Sciatic nerve (tissue), 2 donors: ENCODE measurements at regions of chr1 and their contacts with region 1.

Region 1: DNA sequence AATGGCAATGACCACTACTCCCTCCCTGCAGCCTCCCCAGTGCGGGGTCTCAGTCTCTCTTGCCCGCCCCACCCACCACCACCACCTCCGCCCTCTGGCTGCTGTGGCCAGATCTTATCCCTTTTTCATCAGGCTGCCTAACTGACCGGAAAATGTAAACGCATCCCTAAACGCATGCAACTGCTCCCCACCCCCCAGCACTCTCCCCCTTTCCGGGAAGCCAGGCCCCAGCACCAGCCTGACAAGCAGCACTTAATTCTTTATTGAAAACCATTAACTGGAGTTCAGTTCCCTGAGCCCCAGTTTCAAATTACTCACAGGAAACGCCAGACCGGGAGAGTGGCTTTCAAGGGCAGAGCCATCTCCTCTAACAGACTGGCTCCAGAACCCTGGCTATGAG is 147.7 kb downstream of the DMRTA2 start:
- DNase-seq: no peak
- ATAC-seq: no peak

Region 2: GRCh38 chr1:50289495-50289894 is 13.9 kb after region 1 on chr1:
- intact Hi-C with region 1: loop called (anchors 1 kb)
- DNase-seq: no peak
- ATAC-seq: no peak